GM13976 (cell line): ENCODE measurements at regions of chr12 and their contacts with region 1.

Region 1: GRCh38 chr12:43282106-43282505 is 269.9 kb downstream of the ADAMTS20 start:
- DNase-seq: no peak
- CTCF ChIP-seq: no peak

Region 2: DNA sequence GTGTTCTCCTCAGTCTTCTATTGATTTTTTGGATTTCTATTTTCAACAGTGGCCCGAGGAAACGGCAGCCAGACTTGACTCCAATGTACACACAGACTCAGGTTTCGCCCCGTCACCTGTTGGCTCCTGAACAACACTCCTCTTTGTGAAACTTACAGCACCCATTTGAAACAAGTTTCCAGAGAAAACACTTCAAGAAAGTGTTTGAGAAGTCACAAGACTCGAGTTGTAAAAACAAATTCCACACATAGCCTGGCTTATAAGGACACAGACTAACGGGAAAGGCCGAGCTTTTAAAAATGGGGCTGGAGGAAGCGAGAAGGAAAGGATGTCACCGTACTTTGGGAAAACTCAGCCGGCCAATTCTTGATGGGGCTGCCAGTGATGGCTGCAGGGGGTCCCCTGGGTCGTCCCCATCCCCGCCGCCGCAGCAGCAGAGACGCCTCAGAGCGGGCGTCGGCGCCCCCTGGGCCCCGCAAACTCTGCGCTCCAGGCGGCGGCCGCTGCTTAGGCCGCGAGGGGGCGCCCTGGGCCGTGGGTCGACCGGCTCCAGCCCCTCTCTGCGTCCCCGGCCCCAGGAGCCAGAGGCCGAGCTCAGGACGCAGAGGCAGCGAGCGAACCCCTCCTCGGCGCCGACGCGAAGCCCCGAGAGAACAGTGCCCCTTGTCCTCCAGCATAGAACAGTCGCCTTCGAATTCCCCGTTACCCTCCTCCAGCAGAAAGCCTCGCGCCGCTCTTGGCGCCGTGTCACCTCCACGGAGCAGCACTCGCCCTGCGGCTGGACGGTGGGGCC is 799.5 kb before region 1 on chr12:
- in situ Hi-C with region 1: loop called (anchors 25 kb)
- DNase-seq: peak; percentile 90
- CTCF ChIP-seq: peak; percentile 96

Region 3: DNA sequence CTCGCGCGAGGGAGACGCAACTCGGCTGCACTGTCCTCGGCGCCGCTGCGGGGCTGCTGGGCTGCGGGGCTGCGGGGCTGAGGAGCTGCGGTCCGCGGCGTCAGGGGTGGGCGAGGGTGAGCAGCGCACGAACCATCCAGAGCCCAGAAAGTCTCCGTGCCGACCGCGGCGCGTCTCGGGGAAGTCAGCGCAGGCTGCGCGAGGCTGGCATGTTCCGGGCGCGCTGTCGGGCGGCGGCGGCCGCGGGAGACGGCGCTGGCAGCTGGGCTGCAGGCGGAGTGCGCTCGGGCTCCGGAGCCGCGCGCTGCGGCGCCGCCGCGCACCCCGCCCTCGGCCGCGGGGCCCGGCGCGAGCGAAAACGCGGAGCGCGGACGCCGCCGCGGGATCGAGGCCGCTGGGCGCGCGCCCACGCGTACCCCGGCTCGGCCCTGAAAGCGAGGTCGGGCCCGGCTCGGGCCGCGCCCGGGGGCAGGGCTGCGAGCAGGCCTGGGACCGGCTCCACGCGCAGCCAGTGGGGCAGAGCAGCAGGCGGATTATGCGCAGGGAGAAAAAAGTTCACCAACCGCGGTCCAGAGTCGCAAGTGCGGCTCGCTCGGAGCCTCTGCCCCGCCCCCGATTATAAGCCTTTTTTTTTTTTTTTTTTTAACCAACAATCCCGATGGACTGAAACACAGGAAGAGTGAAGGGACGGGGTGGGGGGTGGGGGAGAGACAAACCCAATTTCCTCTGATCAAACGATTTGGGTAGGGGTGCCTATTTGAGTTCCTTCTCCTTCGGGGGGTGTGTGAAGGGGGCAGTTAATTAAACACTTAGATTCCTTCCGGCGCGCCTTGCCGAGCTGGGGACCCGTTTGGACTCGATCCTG is 692.4 kb before region 1 on chr12 and contains the start of gene PRICKLE1:
- in situ Hi-C with region 1: loop called (anchors 25 kb)
- DNase-seq: peak; percentile 77
- CTCF ChIP-seq: no peak